Activated B cell treated with CpG ODN at 0.5 μM for 24 hours (primary cell): ENCODE measurements at regions of chr3 and their contacts with region 1.

Region 1: GRCh38 chr3:105232553-105232952 is 134.2 kb upstream of the ALCAM start:
- DNase-seq: no peak
- ATAC-seq: no peak
- H3K4me3 Mint-ChIP-seq: no peak overlapping the region
- H3K27ac Mint-ChIP-seq: no peak overlapping the region
- H3K4me1 Mint-ChIP-seq: no peaks in the 10 kb centered on the region
- H3K27me3 Mint-ChIP-seq: peaks cover 6% of the 10 kb centered on the region
- CTCF ChIP-seq: no peak

Region 2: GRCh38 chr3:104687362-104687761 is 545.2 kb before region 1 on chr3:
- CTCF ChIA-PET with region 1: no interaction called
- POLR2A ChIA-PET with region 1: no interaction called
- intact Hi-C with region 1: no loop called
- DNase-seq: no peak
- ATAC-seq: no peak
- H3K4me3 Mint-ChIP-seq: no peak overlapping the region
- H3K27ac Mint-ChIP-seq: no peak overlapping the region
- H3K4me1 Mint-ChIP-seq: no peaks in the 10 kb centered on the region
- H3K27me3 Mint-ChIP-seq: no peaks in the 10 kb centered on the region
- CTCF ChIP-seq: no peak

Region 3: DNA sequence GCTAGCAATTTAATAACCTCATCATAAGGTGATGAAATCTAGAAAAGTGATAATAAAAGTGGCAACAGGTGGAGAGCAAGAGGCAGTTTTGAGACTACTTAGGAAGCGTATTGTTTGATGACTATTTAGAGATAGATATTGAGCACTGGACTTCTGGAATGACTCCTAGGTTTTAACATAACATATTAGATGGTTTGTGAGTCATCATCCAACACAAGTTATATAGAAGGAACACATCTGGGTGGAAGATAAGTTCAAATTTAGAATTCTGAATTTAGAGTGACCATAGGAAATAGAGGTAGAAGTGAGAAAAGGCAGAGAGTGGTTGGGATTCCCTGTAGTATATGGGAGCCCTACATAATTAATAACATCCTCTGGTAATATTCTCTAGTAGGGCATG is 148.6 kb before region 1 on chr3:
- CTCF ChIA-PET with region 1: no interaction called
- POLR2A ChIA-PET with region 1: no interaction called
- intact Hi-C with region 1: no loop called
- DNase-seq: no peak
- ATAC-seq: no peak
- H3K4me3 Mint-ChIP-seq: no peak overlapping the region
- H3K27ac Mint-ChIP-seq: no peak overlapping the region
- H3K4me1 Mint-ChIP-seq: no peaks in the 10 kb centered on the region
- H3K27me3 Mint-ChIP-seq: peaks cover 1% of the 10 kb centered on the region
- CTCF ChIP-seq: no peak

Region 4: GRCh38 chr3:105293441-105293840 is 60.9 kb after region 1 on chr3:
- CTCF ChIA-PET with region 1: no interaction called
- POLR2A ChIA-PET with region 1: no interaction called
- intact Hi-C with region 1: loop called (anchors 10 kb)
- DNase-seq: no peak
- ATAC-seq: no peak
- H3K4me3 Mint-ChIP-seq: no peak overlapping the region
- H3K27ac Mint-ChIP-seq: no peak overlapping the region
- H3K4me1 Mint-ChIP-seq: no peaks in the 10 kb centered on the region
- H3K27me3 Mint-ChIP-seq: no peaks in the 10 kb centered on the region
- CTCF ChIP-seq: no peak